Heart right ventricle (tissue), 16 donors: ENCODE measurements at regions of chr7 and their contacts with region 1.

Region 1: DNA sequence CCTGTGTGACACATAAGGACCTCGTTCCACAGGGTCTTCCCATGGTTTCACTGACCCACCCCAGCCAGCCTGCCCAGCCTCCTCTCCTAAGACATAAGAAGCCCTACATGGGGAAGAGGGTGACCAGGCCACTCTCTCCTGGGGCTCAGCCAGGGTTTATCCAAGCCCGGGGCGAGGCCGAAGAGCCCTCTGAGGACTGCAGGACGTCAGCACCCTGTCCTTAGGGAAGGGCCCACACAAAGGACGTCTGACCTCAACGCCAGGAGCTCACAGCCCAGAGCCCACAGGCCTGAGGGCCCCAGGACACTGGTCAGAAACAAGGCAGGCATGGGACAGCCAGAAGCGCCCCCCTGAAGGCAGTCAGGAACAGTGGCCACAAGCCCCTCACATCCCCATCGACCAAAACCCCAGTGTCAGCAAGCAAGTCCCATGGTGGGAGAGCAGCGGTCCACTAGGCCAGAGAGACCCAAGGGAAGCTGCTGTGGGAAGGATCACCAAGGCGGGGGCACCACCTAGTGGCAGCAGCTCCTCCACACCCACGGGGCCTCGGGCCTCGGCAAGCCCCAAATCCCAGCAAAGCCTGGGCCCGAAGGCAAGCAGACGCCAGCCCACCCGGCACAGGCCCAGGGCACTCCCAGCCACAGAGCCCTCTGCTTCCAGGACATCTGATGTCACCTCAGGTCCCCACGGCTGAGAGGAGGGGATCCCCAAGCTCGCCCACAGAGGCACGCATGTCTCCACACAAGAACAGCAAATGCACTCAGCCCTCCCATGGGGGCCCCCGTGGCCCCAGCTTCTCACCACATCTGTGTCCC is 23.4 kb downstream of the MAD1L1 start:
- DNase-seq: peak; percentile 75 to 78
- ATAC-seq: peak; percentile 54 to 80 (median 70)
- H3K4me3 ChIP-seq: no peak overlapping the region
- H3K27ac ChIP-seq: no peak overlapping the region
- H3K4me1 ChIP-seq: peaks cover 0 to 17% (median 4%) of the 10 kb centered on the region in 9 donors
- H3K27me3 ChIP-seq: no peaks in the 10 kb centered on the region
- CTCF ChIP-seq: peak; percentile 61 to 90 (median 83)

Region 2: GRCh38 chr7:1579481-1580421 is 629.6 kb before region 1 on chr7:
- intact Hi-C with region 1: loop called (anchors 1 to 10 kb)
- DNase-seq: peak; percentile 61 to 81
- ATAC-seq: peak; percentile 90 to 96 (median 92)
- H3K4me3 ChIP-seq: no peak overlapping the region
- H3K27ac ChIP-seq: no peak overlapping the region
- H3K4me1 ChIP-seq: peaks cover 0 to 13% (median 4%) of the 10 kb centered on the region in 9 donors
- H3K27me3 ChIP-seq: no peaks in the 10 kb centered on the region
- CTCF ChIP-seq: peak; percentile 62 to 90 (median 84)

Region 3: GRCh38 chr7:1664711-1665548 is 544.4 kb before region 1 on chr7:
- intact Hi-C with region 1: loop called in 8 of 10 experiments (anchors 5 to 10 kb)
- DNase-seq: peak; percentile 70 to 71
- ATAC-seq: peak; percentile 28 to 60 (median 50)
- H3K4me3 ChIP-seq: peak overlapping the region; percentile 57 to 75 (median 72)
- H3K27ac ChIP-seq: peak overlapping the region; percentile 58 to 92 (median 82)
- H3K4me1 ChIP-seq: peaks cover 18 to 55% (median 46%) of the 10 kb centered on the region in 9 donors
- H3K27me3 ChIP-seq: peaks cover 7 to 84% (median 21%) of the 10 kb centered on the region in 7 donors
- CTCF ChIP-seq: peak; percentile 37 to 88 (median 72)

Region 4: DNA sequence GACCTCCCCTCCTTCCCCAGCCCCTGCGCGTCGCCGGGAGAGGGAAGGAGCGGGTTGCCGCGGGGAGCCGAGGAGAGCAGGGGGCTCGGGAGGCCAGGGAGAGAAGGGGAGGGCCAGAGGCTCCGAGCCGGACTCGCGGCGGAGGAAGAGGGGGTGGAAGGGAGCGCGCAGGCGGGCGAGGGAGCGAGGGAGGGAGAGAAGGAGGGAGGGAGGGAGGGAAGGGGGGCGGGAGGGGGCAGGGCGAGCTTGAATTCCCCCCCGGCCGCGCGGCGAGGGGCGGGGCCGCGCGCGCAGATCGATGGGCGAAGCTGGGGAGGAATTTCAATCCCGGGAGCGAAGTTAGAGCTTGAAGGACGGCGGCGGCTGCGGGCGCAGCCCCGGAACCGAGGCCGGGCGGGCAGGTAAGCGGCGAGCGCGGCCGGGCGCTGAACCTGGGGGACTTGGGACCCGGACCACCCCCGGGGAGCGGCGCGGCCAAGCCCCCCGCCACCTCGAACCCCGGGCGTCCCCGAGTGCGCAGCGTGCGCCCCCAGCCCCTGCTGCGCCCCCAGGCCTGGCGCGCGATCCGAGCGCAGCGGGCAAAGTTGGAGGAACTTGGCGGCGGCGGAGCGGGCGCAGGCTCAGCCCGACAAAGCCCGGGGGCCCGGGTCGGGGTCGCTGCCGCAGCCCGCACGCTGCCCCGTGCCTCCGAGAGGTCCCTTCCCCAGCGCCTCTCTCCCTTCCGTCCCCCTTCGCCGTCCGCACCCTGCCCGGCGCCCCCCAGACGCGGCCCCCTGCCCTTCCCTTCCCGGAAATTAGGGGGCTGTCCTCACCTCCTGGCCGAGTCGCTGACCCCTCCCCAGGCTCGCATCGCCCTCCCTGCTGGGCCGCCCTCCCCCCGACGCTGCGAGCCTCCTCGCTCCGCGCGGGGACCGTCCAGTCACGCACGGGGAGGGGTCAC is 539.1 kb before region 1 on chr7 and contains the start of gene ELFN1:
- intact Hi-C with region 1: loop called in 5 of 10 experiments (anchors 5 to 10 kb)
- DNase-seq: peak in 1 of 2 donors; percentile 52
- ATAC-seq: peak in 3 of 8 donors; percentile 9 to 27 (median 16)
- H3K4me3 ChIP-seq: peak within 1 kb of the TSS; percentile 41 to 56 (median 50)
- H3K27ac ChIP-seq: peak within 1 kb of the TSS in 6 of 10 donors; percentile 44 to 91 (median 76)
- H3K4me1 ChIP-seq: peaks cover 13 to 52% (median 41%) of the 10 kb centered on the region in 9 donors
- H3K27me3 ChIP-seq: peaks cover 0 to 83% (median 37%) of the 10 kb centered on the region in 7 donors
- CTCF ChIP-seq: no peak
- total RNA-seq, gene ELFN1: 3.4 to 9.5 (median 6.4) TPM

Region 5: DNA sequence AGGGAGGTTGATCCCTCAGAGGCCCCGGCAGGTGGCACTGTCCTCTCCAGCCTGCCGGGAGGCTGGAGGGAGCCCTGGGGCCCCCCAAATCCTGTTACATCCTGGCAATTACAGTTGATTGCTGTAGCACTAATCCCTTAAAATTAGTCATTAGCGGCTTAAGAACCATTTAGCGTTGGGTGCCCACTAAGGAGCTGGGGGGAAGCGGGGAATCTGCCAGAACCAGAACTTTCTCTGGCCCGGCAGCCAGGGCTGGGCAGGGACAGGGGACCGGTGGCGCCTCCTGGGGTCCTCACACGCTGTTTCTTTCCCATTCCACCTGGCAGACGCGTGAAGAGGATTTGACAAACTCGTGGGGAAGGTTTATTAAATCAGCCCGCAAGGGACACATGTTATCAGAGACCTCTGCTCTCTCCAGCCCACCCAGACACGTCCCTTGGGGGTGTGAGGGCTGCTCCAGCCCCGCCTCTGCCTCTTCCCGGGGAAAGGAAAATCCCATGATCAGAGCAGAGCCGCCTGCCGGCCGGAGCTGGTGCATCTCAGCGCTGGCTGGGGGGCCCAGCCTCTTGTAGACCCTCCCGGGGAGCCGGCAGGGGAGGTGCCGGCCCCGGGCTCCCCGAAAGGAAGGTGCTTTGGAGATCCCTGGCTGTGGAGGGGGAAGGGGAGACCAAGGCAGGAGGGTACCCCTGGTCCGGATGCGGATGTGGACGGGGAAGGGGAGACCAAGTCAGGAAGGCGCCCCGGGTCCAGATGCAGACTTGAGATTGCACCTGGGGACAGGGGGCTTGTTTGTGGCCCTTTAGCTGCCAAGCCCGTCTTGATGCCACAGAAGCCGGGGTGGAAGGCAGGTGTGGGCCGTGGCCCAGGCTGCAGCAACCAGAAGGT is 396.6 kb before region 1 on chr7:
- intact Hi-C with region 1: loop called in 5 of 10 experiments (anchors 5 to 10 kb)
- DNase-seq: no peak
- ATAC-seq: peak in 5 of 8 donors; percentile 15 to 78 (median 42)
- H3K4me3 ChIP-seq: no peak overlapping the region
- H3K27ac ChIP-seq: no peak overlapping the region
- H3K4me1 ChIP-seq: peaks cover 0 to 17% (median 8%) of the 10 kb centered on the region in 9 donors
- H3K27me3 ChIP-seq: peaks cover 0 to 3% (median 0%) of the 10 kb centered on the region in 7 donors
- CTCF ChIP-seq: peak in 7 of 9 donors; percentile 26 to 65 (median 41)

Region 6: DNA sequence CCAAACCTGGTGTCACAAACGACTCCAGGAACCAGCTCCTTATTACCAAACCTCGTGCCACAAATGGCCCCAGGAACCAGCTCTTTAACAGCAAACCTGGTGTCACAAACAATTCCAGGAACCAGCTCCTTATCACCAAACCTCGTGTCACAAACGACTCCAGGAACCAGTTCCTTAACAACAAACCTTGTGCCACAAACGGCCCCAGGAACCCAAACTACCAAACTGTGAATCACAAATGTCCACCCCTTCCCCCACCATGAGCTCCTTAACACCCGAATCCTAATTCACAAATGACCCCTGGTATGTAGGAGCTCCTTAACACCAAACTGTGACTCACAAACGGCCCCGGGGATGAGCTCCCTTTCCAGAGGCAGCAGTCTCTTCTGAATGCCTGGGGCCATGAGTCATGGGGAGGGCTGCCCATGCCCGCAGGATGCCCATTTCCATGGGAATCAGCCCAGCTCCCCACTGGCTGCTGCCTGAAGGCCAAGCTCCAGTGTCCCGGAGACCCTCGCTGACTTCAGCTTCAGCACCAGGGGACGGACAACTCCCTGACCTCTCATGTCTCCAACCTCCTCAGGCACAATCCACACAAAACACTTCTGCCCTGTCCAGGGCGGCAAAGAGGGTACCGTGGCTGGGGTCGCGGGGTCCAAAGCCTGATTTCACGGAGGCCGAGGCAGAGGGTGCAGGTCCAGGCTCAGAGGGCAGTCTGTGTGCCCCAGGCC is 326.2 kb before region 1 on chr7:
- intact Hi-C with region 1: loop called in 1 of 10 experiments (anchors 10 kb)
- DNase-seq: no peak
- ATAC-seq: no peak
- H3K4me3 ChIP-seq: no peak overlapping the region
- H3K27ac ChIP-seq: no peak overlapping the region
- H3K4me1 ChIP-seq: peaks cover 0 to 16% (median 13%) of the 10 kb centered on the region in 9 donors
- H3K27me3 ChIP-seq: no peaks in the 10 kb centered on the region
- CTCF ChIP-seq: no peak

Region 7: DNA sequence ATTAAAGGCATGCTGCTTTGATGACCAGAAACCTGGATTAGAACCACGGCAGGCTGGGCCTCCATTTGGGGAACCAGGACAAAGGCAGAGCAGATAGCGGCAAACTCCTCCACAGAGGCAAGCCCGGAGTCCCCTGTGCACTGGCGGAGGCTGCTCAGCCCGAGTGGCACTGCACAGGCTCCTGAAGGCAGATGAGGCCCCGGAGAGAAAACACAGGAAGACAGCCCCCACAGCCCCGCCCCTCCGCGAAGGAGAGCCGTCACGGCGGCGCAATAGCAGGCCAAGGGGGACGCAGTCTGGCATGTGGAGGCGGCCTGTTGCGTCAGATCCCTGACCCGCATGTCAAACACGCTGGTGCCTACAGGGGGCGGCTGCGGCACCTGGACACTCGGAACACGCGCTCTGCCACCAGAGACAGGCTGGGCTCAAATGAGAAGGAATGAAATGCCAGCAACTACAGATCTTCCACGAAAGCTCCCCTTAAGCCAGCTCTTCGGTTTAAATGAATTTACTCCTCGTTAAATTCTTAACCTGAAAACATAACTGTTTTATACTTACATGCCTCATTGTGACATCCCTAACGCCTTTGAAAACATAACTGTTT is 105.1 kb before region 1 on chr7:
- intact Hi-C with region 1: loop called in 6 of 10 experiments (anchors 2 to 10 kb)
- DNase-seq: peak; percentile 86 to 90
- ATAC-seq: peak; percentile 78 to 91 (median 86)
- H3K4me3 ChIP-seq: peak overlapping the region in 5 of 10 donors; percentile 6 to 35 (median 24)
- H3K27ac ChIP-seq: peak overlapping the region in 7 of 10 donors; percentile 21 to 56 (median 35)
- H3K4me1 ChIP-seq: peaks cover 6 to 50% (median 34%) of the 10 kb centered on the region in 9 donors
- H3K27me3 ChIP-seq: no peaks in the 10 kb centered on the region
- CTCF ChIP-seq: peak; percentile 56 to 82 (median 71)